ENCODE measurements at regions of chr7 and their contacts with region 1.

Region 1: DNA sequence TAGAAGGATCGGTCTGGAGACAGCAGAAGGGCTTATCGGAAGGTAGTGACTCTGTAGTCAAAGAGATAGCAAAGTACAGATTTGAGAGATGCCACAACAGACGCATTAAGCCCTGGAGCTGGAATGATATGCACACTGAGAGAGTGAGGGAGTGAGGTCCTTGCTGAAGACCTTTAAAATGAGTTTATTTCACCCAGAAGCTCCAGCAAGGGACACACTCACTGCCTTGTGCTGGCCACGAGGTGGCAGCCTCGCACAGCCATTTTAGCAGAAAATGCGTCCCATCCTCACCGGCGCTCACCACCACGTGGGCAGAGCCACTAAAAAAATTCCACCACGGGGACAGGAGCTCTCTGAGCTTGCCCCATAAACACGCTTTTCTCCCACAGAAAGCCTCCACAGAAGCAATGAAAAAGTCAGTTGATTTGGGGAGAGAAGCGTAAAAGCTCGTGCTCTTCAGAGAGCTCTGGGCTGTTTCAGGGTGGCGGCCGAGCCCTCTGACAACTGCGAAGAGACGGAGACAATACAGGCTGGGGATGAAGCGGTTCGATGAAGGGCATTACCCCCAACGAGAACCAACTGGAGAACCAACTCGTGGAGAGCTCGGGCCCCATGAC is 163.0 kb upstream of the KLF14 start:
- DNase-seq: peak; percentile 75
- ATAC-seq: peak; percentile 76
- H3K4me3 Mint-ChIP-seq: no peak overlapping the region
- H3K27ac Mint-ChIP-seq: peak overlapping the region; percentile 81
- H3K4me1 Mint-ChIP-seq: peaks cover 56% of the 10 kb centered on the region
- H3K27me3 Mint-ChIP-seq: no peaks in the 10 kb centered on the region
- CTCF ChIP-seq: peak; percentile 70

Region 2: DNA sequence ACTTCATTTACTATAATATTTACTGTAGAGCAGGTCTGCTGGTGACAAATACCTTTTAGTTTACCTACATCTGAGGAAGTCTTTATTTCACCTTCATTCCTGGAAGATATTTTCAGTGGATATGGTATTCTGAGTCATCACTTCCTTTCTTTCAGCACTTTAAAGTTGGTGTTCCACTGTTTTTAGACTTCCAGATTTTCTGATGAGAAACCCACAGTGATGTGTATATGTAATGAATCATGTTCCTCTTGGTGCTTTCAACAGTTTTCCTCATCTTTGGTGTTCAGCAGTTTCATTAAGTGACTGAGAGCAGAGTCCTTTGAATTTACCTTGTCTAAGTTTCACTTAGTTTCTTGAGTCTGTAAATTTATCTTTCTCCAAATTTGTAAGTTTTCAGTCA is 264.9 kb before region 1 on chr7:
- CTCF ChIA-PET with region 1: no interaction called
- POLR2A ChIA-PET with region 1: no interaction called
- DNase-seq: no peak
- ATAC-seq: no peak
- H3K4me3 Mint-ChIP-seq: no peak overlapping the region
- H3K27ac Mint-ChIP-seq: no peak overlapping the region
- H3K4me1 Mint-ChIP-seq: no peaks in the 10 kb centered on the region
- H3K27me3 Mint-ChIP-seq: no peaks in the 10 kb centered on the region; the same call in 1 of the 2 replicates
- CTCF ChIP-seq: no peak

Region 3: DNA sequence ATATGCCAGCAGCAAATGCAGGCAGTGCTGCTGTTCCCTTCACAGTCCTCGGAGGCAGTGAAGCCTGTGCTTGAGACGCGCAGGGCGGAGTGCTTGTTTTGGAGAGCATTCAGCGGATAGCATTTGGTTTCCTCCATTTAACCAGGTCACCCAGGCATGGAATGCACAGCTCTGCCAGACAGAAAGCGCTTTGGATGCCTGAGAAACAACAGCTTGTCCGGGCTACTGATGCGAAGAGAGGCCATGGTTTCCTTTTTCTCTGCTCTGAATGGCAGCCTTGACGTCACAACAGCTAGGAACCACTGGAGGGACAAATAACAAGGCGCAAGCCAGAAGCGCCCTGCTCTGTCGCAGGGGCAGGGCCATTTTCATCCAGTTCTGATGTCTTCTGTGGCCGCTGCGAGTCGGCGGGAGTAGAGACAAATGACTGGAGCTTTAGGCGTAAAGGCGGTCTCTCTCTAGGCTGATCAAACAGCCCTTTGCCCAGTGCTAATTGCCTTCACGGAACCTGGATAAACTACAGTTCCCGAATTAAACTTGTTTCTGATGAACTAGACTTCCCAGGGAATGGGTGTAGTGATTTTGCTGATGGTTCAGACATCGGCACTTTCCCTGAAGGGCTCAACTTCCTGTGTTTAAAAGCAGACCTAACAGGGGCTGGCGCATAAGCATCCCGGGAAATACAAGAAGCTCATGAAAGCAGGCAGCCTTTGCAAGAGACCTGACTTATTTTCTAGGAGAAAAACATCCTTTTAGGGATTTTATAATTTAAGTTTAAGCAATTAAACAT is 24.6 kb after region 1 on chr7:
- CTCF ChIA-PET with region 1: interaction called, 37 read pairs
- POLR2A ChIA-PET with region 1: no interaction called
- DNase-seq: no peak
- ATAC-seq: peak; percentile 61
- H3K4me3 Mint-ChIP-seq: no peak overlapping the region
- H3K27ac Mint-ChIP-seq: peak overlapping the region; percentile 89
- H3K4me1 Mint-ChIP-seq: peaks cover 22% of the 10 kb centered on the region
- H3K27me3 Mint-ChIP-seq: no peaks in the 10 kb centered on the region; the same call in 1 of the 2 replicates
- CTCF ChIP-seq: no peak

Region 4: DNA sequence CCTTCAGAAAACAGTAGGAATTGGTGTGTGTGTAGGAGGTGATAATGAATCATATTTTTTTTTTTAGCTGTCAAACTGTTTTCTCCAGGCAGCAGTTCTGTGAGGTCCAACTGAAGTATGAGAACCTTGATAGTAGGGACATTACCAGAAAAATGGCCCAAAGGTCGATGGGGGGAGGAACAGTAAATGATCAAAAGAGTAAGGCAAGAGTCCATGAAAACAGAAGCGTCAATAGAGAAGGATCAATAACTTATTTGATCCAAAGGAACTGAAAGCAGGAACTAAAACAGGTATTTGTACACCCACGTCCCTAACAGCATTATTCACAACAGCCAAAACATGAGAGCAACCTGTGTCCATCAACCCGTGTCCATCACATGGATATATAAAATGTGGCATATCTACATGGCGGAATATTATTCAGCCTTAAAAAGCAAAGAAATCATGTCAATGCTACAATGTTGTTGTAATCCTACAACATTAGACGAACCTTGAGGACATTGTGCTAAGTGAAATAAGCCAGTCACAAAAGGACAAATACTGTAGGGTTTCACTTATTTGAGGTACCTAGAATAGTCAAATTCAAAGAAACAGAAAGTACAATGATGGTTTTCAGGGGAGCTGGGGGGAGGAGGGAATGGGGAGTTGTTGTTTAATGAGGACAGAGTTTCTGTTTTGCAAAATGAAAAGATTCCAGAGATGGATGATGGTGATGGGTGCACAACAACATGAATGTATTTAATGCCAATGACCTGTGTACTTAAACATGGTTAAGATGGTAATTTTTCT is 51.0 kb after region 1 on chr7:
- CTCF ChIA-PET with region 1: interaction called, 27 read pairs
- POLR2A ChIA-PET with region 1: no interaction called
- DNase-seq: no peak
- ATAC-seq: no peak
- H3K4me3 Mint-ChIP-seq: no peak overlapping the region
- H3K27ac Mint-ChIP-seq: no peak overlapping the region
- H3K4me1 Mint-ChIP-seq: peaks cover 19% of the 10 kb centered on the region
- H3K27me3 Mint-ChIP-seq: no peaks in the 10 kb centered on the region
- CTCF ChIP-seq: no peak

Region 5: DNA sequence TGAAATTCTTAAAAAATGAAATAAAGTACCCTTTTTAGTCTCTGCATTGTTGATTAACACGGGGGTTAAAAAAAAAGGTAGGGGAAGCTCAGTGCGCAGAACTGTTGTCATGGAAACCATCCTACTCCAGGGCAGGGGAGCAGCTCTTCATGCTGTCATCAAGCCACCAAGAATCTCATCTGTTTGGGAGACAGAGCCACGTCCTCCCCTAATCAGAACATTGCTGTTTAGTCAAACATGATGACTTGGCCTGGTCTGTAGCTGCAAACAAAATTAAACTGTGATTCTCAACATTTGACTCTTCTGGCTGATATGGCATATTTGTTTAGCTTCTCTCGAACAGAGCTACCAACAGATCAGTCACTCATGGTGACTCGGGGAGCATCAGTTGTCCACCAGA is 91.4 kb after region 1 on chr7:
- CTCF ChIA-PET with region 1: interaction called, 35 read pairs
- POLR2A ChIA-PET with region 1: no interaction called
- DNase-seq: no peak
- ATAC-seq: no peak
- H3K4me3 Mint-ChIP-seq: no peak overlapping the region
- H3K27ac Mint-ChIP-seq: no peak overlapping the region; the same call in 1 of the 2 replicates
- H3K4me1 Mint-ChIP-seq: no peaks in the 10 kb centered on the region
- H3K27me3 Mint-ChIP-seq: no peaks in the 10 kb centered on the region
- CTCF ChIP-seq: no peak

Region 6: DNA sequence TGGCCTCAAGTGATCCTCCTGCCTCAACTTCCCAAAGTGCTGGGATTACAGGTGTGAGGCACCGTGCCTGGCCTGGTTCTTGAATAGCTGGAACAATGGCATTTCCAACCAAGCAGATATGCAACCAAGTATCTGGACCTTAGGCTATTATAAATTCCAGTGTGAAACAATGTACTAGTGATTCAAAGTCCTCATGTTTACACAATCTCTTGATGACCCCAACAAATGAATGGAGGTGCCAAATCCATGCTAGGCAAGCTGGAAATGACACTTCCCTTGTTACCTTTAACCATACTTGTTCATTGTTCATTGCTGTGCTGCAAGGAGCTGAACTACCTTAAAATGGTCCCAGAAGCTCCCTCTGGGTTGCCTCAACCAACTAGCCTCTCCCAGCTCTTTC is 119.2 kb after region 1 on chr7:
- CTCF ChIA-PET with region 1: interaction called, 15 read pairs
- POLR2A ChIA-PET with region 1: no interaction called
- DNase-seq: no peak
- ATAC-seq: no peak
- H3K4me3 Mint-ChIP-seq: no peak overlapping the region
- H3K27ac Mint-ChIP-seq: no peak overlapping the region
- H3K4me1 Mint-ChIP-seq: peaks cover 24% of the 10 kb centered on the region
- H3K27me3 Mint-ChIP-seq: no peaks in the 10 kb centered on the region
- CTCF ChIP-seq: no peak

Region 7: DNA sequence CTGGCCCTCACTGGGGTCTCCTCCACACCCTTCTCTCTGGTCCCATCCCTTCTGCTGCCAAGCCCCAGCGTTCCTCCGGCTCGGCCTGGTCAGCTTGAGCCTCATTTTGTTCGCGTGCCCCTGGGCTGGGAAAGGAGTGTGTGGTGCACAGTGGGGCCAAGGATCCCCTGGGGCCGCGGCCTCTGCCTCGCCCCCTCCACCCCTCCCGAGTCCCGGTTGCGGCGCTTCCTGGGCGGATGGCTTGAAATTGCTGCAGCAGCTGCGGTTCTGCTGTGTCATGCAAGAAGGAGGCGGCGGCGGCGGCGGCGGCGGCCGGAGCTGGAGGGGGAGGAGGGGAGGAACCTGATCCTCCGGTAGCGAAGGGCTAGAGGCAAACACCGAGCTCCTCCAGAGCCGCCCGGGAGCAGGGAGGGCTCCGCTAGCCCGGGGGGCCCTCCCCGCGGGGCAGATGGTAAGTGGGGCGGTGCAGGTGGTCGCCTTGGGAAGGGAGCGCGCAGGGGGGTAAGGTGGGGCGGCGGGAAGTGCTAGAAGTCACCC is 212.8 kb after region 1 on chr7:
- CTCF ChIA-PET with region 1: interaction called, 15 read pairs
- POLR2A ChIA-PET with region 1: no interaction called
- DNase-seq: peak; percentile 76
- ATAC-seq: peak; percentile 13
- H3K4me3 Mint-ChIP-seq: peak overlapping the region; percentile 95
- H3K27ac Mint-ChIP-seq: peak overlapping the region; percentile 96
- H3K4me1 Mint-ChIP-seq: peaks cover 42% of the 10 kb centered on the region
- H3K27me3 Mint-ChIP-seq: peaks cover 12% of the 10 kb centered on the region
- CTCF ChIP-seq: no peak

Measured in WTC11 (cell line).